ENCODE measurements at regions of chr12 and their contacts with region 1.

Region 1: DNA sequence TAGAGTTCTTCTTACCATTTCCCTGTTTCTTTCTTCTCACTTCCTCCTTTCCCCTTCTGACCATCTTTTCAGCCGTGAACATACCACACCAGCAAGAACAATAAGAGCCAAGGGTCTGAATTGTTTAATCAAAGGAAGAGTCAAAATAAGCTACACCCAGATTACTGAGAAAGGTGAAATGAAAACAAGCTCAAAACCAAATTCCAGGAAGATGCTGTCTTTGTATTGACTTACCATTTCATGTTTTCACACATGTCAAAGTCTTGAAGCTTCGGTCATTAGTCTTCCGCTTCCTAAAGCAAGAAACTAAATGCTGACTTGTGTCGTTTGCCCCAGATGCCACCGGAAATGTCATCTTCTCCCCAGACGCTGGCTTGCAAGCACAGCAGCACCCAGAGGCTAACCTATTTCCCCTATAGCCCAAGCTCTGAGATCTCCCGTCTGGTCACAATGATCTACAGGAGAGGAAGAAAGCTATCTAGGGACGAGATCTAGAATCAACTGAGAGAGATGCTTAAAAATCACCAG is 136.5 kb upstream of the AMIGO2 start:
- DNase-seq: peak in 8 of 9 donors; percentile 56 to 82 (median 72)
- ATAC-seq: peak; percentile 81
- H3K4me3 ChIP-seq: peak overlapping the region; percentile 80
- H3K4me3 Mint-ChIP-seq: peak overlapping the region; percentile 91 to 100 (median 98)
- H3K27ac ChIP-seq: peak overlapping the region; percentile 76
- H3K27ac Mint-ChIP-seq: peak overlapping the region; percentile 91 to 98 (median 96)
- H3K4me1 ChIP-seq: peaks cover 9 to 14% of the 10 kb centered on the region in 2 donors
- H3K4me1 Mint-ChIP-seq: peaks cover 6 to 52% (median 26%) of the 10 kb centered on the region in 7 donors
- H3K27me3 ChIP-seq: no peaks in the 10 kb centered on the region
- H3K27me3 Mint-ChIP-seq: peaks cover 0 to 4% (median 0%) of the 10 kb centered on the region in 5 donors

Region 2: DNA sequence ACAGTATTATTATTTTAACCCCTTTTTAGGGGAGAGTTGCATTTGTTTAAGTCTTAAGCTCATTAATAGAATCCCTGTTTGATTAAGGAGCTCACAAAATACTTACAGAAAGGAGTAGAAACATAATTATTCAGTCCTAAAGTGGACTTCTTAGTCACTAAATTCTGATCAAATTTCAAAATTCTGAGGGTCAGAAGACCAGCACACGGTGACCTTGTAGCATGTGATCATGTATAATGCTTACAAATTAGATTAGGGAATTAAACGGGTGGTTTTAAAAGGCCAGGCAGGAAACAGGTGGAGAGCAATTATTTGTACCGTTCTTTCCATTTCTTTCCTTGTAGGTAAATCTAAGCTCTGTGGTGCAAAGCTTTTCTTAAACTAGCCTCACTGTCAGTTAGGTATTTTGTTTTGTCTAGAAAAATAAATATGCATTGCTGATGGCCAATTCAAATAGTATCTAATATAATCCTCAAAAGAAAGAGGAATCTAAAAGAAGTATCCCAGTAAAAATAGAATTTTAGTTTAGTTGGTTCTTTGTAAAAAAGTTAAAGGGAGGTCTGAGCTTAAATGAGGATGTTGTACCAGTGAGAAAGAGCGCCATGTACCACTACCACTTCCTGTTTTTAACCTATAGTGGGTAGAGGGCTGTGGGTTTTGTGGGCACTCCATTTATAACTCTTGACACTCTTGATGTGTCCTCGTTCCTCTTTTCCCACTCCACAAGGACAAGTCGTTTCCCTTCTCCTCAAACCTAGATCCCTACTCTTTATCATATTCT is 998.5 kb before region 1 on chr12:
- CTCF ChIA-PET with region 1: interaction called, 3 read pairs
- POLR2A ChIA-PET with region 1: no interaction called
- intact Hi-C with region 1: loop called (anchors 2 to 5 kb)
- DNase-seq: peak in 8 of 9 donors; percentile 58 to 87 (median 84)
- ATAC-seq: peak; percentile 54
- H3K4me3 ChIP-seq: peak overlapping the region; percentile 41
- H3K4me3 Mint-ChIP-seq: peak overlapping the region; percentile 74 to 89 (median 81)
- H3K27ac ChIP-seq: peak overlapping the region; percentile 78
- H3K27ac Mint-ChIP-seq: peak overlapping the region; percentile 89 to 100 (median 99)
- H3K4me1 ChIP-seq: peaks cover 95% of the 10 kb centered on the region in 2 donors
- H3K4me1 Mint-ChIP-seq: peaks cover 69 to 100% (median 98%) of the 10 kb centered on the region in 7 donors
- H3K27me3 ChIP-seq: no peaks in the 10 kb centered on the region
- H3K27me3 Mint-ChIP-seq: no peaks in the 10 kb centered on the region

Region 3: GRCh38 chr12:47032644-47033043 is 183.6 kb before region 1 on chr12:
- CTCF ChIA-PET with region 1: interaction called, 7 read pairs
- POLR2A ChIA-PET with region 1: interaction called, 5 read pairs
- intact Hi-C with region 1: loop called (anchors 1 kb)
- DNase-seq: peak in 7 of 9 donors; percentile 48 to 74 (median 60)
- ATAC-seq: peak; percentile 83
- H3K4me3 ChIP-seq: no peak overlapping the region
- H3K4me3 Mint-ChIP-seq: peak overlapping the region in 6 of 10 donors; percentile 1 to 44 (median 28)
- H3K27ac ChIP-seq: no peak overlapping the region
- H3K27ac Mint-ChIP-seq: peak overlapping the region in 5 of 9 donors; percentile 1 to 36 (median 11)
- H3K4me1 ChIP-seq: peaks cover 0 to 6% of the 10 kb centered on the region in 2 donors
- H3K4me1 Mint-ChIP-seq: peaks cover 9 to 40% (median 24%) of the 10 kb centered on the region in 7 donors
- H3K27me3 ChIP-seq: no peaks in the 10 kb centered on the region
- H3K27me3 Mint-ChIP-seq: peaks cover 0 to 9% (median 0%) of the 10 kb centered on the region in 5 donors

Region 4: DNA sequence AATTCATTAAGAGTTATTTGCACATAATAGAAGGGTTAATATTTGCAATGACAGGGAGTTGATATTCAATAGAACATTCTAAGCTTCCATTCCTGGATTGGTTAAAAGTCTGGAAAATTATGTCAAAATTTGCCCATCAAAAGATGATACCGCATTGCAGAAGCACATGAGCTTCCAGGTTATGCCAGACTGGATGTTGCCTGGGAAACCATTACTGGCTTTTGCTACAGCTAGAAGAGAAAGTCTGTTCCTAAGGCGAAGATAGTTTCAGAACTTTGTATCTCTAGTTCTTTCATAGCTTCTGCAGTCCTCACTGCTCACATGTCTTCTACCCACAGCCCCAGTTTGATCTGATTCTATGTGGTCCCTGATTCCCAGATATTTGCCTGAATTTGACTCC is 14.0 kb before region 1 on chr12:
- CTCF ChIA-PET with region 1: interaction called, 9 read pairs
- POLR2A ChIA-PET with region 1: interaction called, 173 read pairs
- intact Hi-C with region 1: loop called (anchors 1 kb)
- DNase-seq: no peak
- ATAC-seq: no peak
- H3K4me3 ChIP-seq: no peak overlapping the region
- H3K4me3 Mint-ChIP-seq: peak overlapping the region in 5 of 10 donors; percentile 17 to 52 (median 24)
- H3K27ac ChIP-seq: peak overlapping the region; percentile 41
- H3K27ac Mint-ChIP-seq: peak overlapping the region in 8 of 9 donors; percentile 42 to 98 (median 72)
- H3K4me1 ChIP-seq: peaks cover 48 to 49% of the 10 kb centered on the region in 2 donors
- H3K4me1 Mint-ChIP-seq: peaks cover 47 to 97% (median 85%) of the 10 kb centered on the region in 7 donors
- H3K27me3 ChIP-seq: no peaks in the 10 kb centered on the region
- H3K27me3 Mint-ChIP-seq: no peaks in the 10 kb centered on the region

Region 5: DNA sequence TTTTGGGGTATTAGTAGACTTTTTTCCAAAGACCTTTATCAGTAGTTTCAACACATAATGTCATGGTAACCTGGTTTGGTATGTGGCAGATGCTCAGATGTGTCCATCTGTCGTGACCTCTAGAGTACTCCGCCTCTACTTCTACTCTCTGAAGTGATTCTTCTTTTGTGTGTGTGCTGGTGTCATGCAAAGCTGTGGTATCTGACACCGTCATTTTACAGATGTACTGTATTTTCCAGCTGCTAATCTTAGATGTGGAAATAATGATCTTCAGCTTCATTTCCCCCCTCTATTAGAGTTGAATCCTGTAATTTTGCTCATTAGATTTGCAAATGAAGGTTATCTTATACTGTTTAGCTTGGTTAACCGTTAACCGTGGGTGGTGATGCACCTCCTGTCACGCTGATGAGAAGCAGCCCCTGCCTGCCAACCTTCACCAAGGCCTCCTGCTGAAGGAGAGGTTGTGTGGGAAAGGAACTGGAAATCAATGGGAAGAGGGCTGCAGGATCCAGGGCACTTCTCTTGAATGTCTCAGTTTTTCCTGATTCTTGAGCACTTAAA is 86.0 kb after region 1 on chr12:
- CTCF ChIA-PET with region 1: interaction called, 11 read pairs
- POLR2A ChIA-PET with region 1: interaction called, 68 read pairs
- intact Hi-C with region 1: loop called (anchors 1 kb)
- DNase-seq: no peak
- ATAC-seq: no peak
- H3K4me3 ChIP-seq: no peak overlapping the region
- H3K4me3 Mint-ChIP-seq: peak overlapping the region in 2 of 10 donors; percentile 21 to 34
- H3K27ac ChIP-seq: no peak overlapping the region
- H3K27ac Mint-ChIP-seq: peak overlapping the region in 6 of 9 donors; percentile 14 to 84 (median 72)
- H3K4me1 ChIP-seq: peaks cover 15 to 34% of the 10 kb centered on the region in 2 donors
- H3K4me1 Mint-ChIP-seq: peaks cover 30 to 78% (median 63%) of the 10 kb centered on the region in 7 donors
- H3K27me3 ChIP-seq: no peaks in the 10 kb centered on the region
- H3K27me3 Mint-ChIP-seq: no peaks in the 10 kb centered on the region

Region 6: GRCh38 chr12:47397664-47398281 is 181.6 kb after region 1 on chr12:
- CTCF ChIA-PET with region 1: interaction called, 12 read pairs
- POLR2A ChIA-PET with region 1: interaction called, 11 read pairs
- intact Hi-C with region 1: loop called (anchors 1 kb)
- DNase-seq: peak in 8 of 9 donors; percentile 33 to 71 (median 54)
- ATAC-seq: peak; percentile 86
- H3K4me3 ChIP-seq: peak overlapping the region; percentile 20
- H3K4me3 Mint-ChIP-seq: peak overlapping the region; percentile 29 to 73 (median 64)
- H3K27ac ChIP-seq: no peak overlapping the region
- H3K27ac Mint-ChIP-seq: peak overlapping the region; percentile 61 to 98 (median 91)
- H3K4me1 ChIP-seq: peaks cover 41% of the 10 kb centered on the region in 2 donors
- H3K4me1 Mint-ChIP-seq: peaks cover 28 to 76% (median 52%) of the 10 kb centered on the region in 7 donors
- H3K27me3 ChIP-seq: no peaks in the 10 kb centered on the region
- H3K27me3 Mint-ChIP-seq: no peaks in the 10 kb centered on the region

Region 7: DNA sequence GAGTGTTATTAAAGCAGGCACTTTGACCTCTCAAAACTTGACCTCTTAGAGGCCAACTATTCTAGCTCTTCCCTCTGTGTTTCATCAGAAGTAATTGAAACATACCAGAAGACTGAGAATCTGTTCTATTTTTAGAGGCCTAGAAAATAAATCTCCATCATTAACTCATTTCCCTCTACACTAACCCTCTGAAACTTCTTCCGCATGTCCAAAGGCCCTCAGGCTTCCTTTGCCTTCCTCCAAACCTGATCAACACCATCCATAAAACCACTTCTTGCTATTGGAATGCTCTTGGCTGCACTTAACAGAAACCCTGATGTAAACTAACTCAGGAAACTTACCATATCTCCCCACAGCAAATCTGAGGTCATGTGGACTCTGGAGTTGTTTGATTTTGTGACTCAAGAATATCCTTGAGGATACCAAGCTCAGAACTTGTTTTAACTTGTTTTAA is 293.2 kb after region 1 on chr12:
- CTCF ChIA-PET with region 1: no interaction called
- POLR2A ChIA-PET with region 1: no interaction called
- intact Hi-C with region 1: no loop called
- DNase-seq: no peak
- ATAC-seq: no peak
- H3K4me3 ChIP-seq: no peak overlapping the region
- H3K4me3 Mint-ChIP-seq: no peak overlapping the region
- H3K27ac ChIP-seq: no peak overlapping the region
- H3K27ac Mint-ChIP-seq: peak overlapping the region in 2 of 9 donors; percentile 5 to 56
- H3K4me1 ChIP-seq: no peaks in the 10 kb centered on the region
- H3K4me1 Mint-ChIP-seq: no peaks in the 10 kb centered on the region
- H3K27me3 ChIP-seq: no peaks in the 10 kb centered on the region
- H3K27me3 Mint-ChIP-seq: no peaks in the 10 kb centered on the region

Measured in naive thymus-derived CD4-positive, alpha-beta T cell (primary cell).